Activated CD4-positive, alpha-beta memory T cell treated with anti-CD3 and anti-CD28 coated beads, Interleukin-2, amount 10 ng/mL, durations not matched to agents 7 days and 5 days (primary cell): ENCODE measurements at regions of chr6 and their contacts with region 1.

Region 1: GRCh38 chr6:142857233-142857761 is 87.7 kb downstream of the HIVEP2 start:
- DNase-seq: no peak
- H3K4me3 Mint-ChIP-seq: peak overlapping the region; percentile 69
- H3K27ac Mint-ChIP-seq: peak overlapping the region; percentile 98
- H3K4me1 Mint-ChIP-seq: peaks cover 82% of the 10 kb centered on the region
- H3K27me3 Mint-ChIP-seq: no peaks in the 10 kb centered on the region

Region 2: DNA sequence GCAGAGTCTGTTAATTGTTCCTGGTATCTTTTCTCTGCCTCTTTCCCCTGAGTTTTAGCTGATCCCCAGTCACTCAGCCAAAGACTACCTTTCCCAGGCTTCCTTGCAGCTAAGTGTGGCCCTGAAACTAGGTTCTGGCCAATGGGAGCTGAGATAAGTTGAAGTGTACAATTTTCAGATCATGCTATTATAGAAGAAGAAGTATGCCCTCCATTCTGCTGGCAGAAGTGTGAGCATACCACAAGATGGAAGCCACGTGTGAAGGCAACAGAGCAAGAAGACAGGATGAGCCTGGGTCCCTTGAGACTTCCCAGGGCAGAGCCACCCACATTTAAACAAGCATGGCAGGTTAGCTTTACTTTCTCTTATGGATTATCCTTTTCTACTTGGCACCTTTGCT is 185.5 kb before region 1 on chr6:
- CTCF ChIA-PET with region 1: no interaction called
- POLR2A ChIA-PET with region 1: no interaction called
- DNase-seq: no peak
- H3K4me3 Mint-ChIP-seq: no peak overlapping the region
- H3K27ac Mint-ChIP-seq: no peak overlapping the region
- H3K4me1 Mint-ChIP-seq: no peaks in the 10 kb centered on the region
- H3K27me3 Mint-ChIP-seq: peaks cover 17% of the 10 kb centered on the region

Region 3: DNA sequence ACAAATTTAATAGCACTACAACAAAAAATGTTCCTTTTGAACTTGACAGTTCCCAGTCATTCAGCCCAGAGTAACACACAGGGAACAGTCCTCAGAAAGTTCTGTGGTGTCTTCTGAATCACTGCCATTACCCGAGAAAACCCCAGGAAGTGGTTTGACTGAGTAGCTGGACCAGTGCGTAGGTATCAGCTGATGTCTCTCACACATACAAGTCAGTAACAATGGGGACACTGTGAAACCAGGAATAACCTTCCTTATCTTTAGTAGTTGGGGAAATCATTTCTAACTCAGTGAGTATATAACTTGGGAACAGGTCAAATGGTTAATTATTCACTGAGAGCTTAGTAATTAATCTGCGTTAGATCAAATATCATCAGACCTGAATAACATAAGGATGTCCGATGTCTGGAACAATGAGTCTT is 14.6 kb after region 1 on chr6:
- CTCF ChIA-PET with region 1: interaction called, 5 read pairs
- POLR2A ChIA-PET with region 1: interaction called, 32 read pairs
- DNase-seq: peak; percentile 69
- H3K4me3 Mint-ChIP-seq: peak overlapping the region; percentile 11
- H3K27ac Mint-ChIP-seq: peak overlapping the region; percentile 56
- H3K4me1 Mint-ChIP-seq: peaks cover 76% of the 10 kb centered on the region
- H3K27me3 Mint-ChIP-seq: no peaks in the 10 kb centered on the region

Region 4: GRCh38 chr6:142926494-142927270 is 69.4 kb after region 1 on chr6:
- CTCF ChIA-PET with region 1: interaction called, 3 read pairs
- POLR2A ChIA-PET with region 1: interaction called, 34 read pairs
- DNase-seq: peak; percentile 82
- H3K4me3 Mint-ChIP-seq: peak overlapping the region; percentile 84
- H3K27ac Mint-ChIP-seq: peak overlapping the region; percentile 87
- H3K4me1 Mint-ChIP-seq: peaks cover 42% of the 10 kb centered on the region
- H3K27me3 Mint-ChIP-seq: no peaks in the 10 kb centered on the region

Region 5: GRCh38 chr6:142935553-142936517 is 78.5 kb after region 1 on chr6:
- CTCF ChIA-PET with region 1: no interaction called
- POLR2A ChIA-PET with region 1: interaction called, 11 read pairs
- DNase-seq: peak; percentile 40
- H3K4me3 Mint-ChIP-seq: peak overlapping the region; percentile 80
- H3K27ac Mint-ChIP-seq: peak overlapping the region; percentile 87
- H3K4me1 Mint-ChIP-seq: peaks cover 81% of the 10 kb centered on the region
- H3K27me3 Mint-ChIP-seq: no peaks in the 10 kb centered on the region